ENCODE measurements at regions of chr11 and their contacts with region 1.

Region 1: GRCh38 chr11:67262731-67263675 is 3.3 kb upstream of the GRK2 start:
- DNase-seq: peak; percentile 83
- H3K4me3 ChIP-seq: peak overlapping the region; percentile 9
- H3K27ac ChIP-seq: peak overlapping the region; percentile 77
- H3K4me1 ChIP-seq: peaks cover 44% of the 10 kb centered on the region
- H3K27me3 ChIP-seq: no peaks in the 10 kb centered on the region
- CTCF ChIP-seq: peak; percentile 88

Region 2: DNA sequence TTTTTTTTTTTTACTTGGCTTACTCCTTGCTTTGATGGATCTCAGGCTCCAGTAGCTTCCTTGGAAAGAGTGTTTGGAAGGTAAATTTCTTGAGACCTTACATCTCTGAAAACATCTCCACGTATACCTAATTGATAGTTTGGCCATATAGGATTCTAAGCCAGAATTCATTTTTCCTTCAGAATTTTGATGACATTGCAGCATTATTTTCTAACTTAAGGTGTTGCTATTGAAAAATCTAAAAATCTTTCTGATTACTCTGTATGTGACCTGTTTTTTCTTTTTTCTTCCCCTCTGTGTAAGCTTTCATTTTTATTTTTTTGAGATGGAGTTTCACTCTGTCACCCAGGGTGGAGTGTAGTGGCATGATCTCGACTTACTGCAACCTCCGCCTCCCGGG is 510.9 kb before region 1 on chr11:
- intact Hi-C with region 1: no loop called
- DNase-seq: no peak
- H3K4me3 ChIP-seq: no peak overlapping the region
- H3K27ac ChIP-seq: no peak overlapping the region
- H3K4me1 ChIP-seq: no peaks in the 10 kb centered on the region
- H3K27me3 ChIP-seq: no peaks in the 10 kb centered on the region
- CTCF ChIP-seq: no peak

Region 3: DNA sequence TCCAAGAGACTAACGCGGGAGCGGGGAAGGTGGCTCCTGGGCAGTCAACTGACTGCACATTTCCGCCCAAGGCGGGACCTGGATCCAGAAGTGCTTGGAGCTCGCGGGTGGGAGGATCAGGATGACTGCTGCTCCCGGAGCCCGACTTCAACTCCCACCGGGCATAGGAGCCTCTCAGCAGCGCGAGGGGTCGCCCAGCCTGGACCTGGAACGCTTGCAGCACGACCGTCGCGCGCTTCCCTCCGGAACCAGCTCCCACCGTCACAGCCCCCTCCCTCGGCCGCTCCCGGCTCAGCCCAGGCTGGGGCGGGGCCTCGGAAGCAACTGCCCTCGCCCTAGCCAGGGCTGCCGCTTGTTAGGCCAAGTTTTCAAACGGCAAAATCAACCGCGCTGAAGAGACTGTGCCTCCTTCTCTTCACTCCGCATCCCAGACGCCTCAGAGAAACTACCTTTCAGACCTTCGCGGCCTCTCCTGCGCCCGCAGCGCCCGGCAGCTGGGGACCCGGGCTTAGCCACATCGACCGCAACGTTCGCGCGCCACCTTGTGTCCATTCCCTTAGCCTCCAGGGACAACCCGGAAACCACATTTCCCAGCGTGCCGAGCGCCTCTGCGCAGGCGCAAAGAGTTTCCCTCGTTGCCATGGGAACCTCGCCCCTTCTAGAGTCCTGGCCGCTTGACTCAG is 54.3 kb after region 1 on chr11:
- intact Hi-C with region 1: loop called (anchors 5 kb)
- DNase-seq: peak; percentile 95
- H3K4me3 ChIP-seq: peak overlapping the region; percentile 83
- H3K27ac ChIP-seq: peak overlapping the region; percentile 98
- H3K4me1 ChIP-seq: peaks cover 30% of the 10 kb centered on the region
- H3K27me3 ChIP-seq: no peaks in the 10 kb centered on the region
- CTCF ChIP-seq: peak; percentile 97

Region 4: DNA sequence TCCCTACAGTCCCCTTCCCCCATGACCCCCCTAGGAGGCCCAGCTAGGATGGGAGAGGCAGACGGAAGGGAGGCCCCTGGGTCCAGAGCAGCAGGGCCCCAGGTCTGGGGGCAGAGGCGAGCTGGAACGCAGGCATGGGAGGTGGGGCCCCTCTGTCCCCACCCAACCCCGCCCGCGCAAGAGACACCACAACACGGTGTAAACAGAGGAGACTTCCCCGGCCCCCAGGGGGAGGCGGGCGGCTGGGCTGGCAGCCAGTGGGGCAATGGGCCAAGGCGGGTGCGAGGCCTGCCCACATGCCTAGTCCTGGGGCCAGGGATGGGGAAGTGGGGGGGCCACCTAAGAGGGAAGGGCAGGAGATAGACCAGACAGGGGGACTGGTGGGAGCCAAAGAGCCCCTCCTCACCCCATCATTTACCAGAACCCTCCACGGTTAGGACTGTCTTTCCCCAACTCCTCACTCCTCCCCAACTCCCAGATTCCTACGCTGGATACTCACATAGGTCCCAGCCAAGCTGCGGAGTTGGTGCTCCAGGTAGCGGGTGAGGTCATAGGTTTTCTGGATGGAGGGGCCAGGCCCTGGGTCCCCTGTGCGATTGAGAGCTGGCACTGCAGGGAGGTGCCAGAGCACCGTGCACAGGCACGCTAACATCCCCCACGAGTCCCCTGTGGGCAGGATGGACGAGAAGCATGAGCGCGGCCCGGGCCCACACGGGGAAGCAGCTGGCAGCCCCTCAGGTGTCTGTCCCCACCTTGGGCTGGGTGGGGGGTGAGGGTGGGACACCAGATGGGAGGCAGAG is 104.2 kb after region 1 on chr11:
- intact Hi-C with region 1: no loop called
- DNase-seq: no peak
- H3K4me3 ChIP-seq: no peak overlapping the region
- H3K27ac ChIP-seq: peak overlapping the region; percentile 1
- H3K4me1 ChIP-seq: peaks cover 47% of the 10 kb centered on the region
- H3K27me3 ChIP-seq: no peaks in the 10 kb centered on the region
- CTCF ChIP-seq: no peak